Prostate gland (tissue), 2 donors: ENCODE measurements at regions of chr21 and their contacts with region 1.

Region 1: GRCh38 chr21:37563641-37564340 is 197.2 kb downstream of the DYRK1A start:
- DNase-seq: peak; percentile 93
- H3K4me3 ChIP-seq: peak overlapping the region; percentile 54 to 55
- H3K27ac ChIP-seq: peak overlapping the region; percentile 77 to 86
- H3K4me1 ChIP-seq: no peaks in the 10 kb centered on the region
- H3K27me3 ChIP-seq: no peaks in the 10 kb centered on the region
- CTCF ChIP-seq: peak in 3 of 4 experiments; percentile 35 to 61 (median 54)
- POLR2A ChIP-seq: peak; percentile 68

Region 2: DNA sequence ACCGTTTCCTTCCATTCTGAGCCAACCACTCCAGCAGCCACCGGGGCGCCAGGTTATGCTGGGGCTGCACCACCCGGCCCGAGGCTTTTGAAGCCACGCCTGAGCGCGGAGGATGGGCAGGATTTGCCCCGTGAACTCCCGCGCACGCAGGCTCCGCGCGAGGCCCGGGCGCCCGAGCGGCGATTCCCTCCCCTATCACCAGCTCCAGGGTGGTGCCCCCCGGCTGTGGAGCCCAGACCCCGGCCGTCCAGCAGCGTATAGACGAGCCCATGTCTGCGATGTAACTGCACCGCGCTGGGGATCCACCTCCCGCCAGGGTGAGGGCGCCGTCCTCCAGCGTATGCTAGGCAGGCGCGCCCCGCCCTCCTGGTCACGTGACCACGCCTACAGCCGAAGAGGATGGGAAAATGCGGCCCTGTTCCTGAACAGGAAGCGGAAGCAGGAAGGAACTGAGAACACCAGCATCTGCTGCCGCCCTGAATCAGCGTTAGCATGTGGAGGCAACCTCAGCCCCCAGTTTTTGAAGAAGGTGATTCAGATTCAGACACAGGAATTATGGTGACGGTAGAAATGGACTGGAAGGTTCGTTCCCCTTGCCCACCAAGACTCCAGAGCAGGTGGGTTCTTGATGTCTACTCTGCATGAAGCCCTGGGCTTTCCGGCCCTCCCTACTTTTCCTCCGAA is 342.7 kb before region 1 on chr21:
- intact Hi-C with region 1: loop called (anchors 5 kb)
- DNase-seq: peak; percentile 87
- H3K4me3 ChIP-seq: peak overlapping the region; percentile 41 to 57
- H3K27ac ChIP-seq: peak overlapping the region; percentile 44 to 67
- H3K4me1 ChIP-seq: no peaks in the 10 kb centered on the region
- H3K27me3 ChIP-seq: no peaks in the 10 kb centered on the region
- CTCF ChIP-seq: peak in 3 of 4 experiments; percentile 55 to 60 (median 58)
- POLR2A ChIP-seq: peak; percentile 29

Region 3: DNA sequence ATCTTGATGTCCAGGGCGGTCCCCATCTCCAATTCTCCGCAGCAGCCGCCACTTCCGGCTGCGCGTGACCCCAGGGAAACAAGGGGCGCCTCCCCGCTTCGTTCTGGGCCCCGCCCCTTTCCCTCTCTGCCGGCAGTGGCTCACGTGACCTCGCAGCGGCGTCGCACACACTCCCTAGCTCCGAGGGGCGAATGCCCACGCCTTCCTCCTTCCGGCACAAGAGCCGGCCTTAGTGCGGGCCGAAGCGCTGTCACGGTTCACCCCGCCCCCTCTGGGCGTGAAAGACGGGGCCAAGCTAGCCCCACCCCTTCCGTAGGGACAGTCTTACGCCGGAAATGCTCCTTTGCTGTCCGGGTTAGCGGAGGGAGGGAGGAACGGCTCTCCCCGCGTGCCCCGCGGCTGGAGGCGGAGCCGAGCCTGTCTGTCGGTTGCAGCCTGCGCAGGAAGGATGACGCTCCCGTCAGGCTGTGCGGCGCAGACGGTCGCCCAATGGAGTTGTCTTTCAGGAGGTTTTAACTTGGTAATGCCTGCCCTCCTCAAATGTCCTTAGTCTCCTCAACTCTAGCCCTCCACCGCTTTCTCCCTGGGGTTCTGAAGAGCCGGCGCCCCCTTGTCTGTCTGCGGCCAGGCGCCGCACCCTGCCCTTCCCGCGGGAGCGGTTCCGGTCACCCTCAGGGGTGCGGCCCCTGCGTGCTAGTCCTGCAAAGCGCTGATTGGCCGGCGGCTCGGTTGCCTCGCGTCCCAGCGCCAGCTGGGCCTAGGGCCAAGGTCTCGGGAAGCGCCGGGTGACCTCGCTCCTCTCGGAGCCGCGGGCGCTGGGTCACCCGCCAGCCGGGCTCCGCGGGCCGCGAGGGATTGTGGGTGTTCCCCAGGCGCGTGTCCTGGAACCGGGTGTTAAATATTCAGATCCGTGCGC is 296.3 kb before region 1 on chr21 and contains the start of gene VPS26C:
- intact Hi-C with region 1: loop called (anchors 5 kb)
- DNase-seq: peak; percentile 98
- H3K4me3 ChIP-seq: peak within 1 kb of the TSS; percentile 74 to 81
- H3K27ac ChIP-seq: peak within 1 kb of the TSS; percentile 94 to 96
- H3K4me1 ChIP-seq: peaks cover 4% of the 10 kb centered on the region
- H3K27me3 ChIP-seq: no peaks in the 10 kb centered on the region
- CTCF ChIP-seq: peak in 1 of 4 experiments; percentile 3
- POLR2A ChIP-seq: peak; percentile 75
- total RNA-seq, gene VPS26C: 36.8 to 46.1 TPM